BJ (cell line): ENCODE measurements at regions of chr9 and their contacts with region 1.

Region 1: GRCh38 chr9:136122425-136123383 is 4.0 kb upstream of the TMEM250 start:
- DNase-seq: no peak
- H3K4me3 ChIP-seq: no peak overlapping the region; the same call in 1 of the 2 replicates
- H3K27me3 ChIP-seq: peaks cover 6% of the 10 kb centered on the region
- CTCF ChIP-seq: peak; percentile 96

Region 2: GRCh38 chr9:135864447-135865049 is 258.2 kb before region 1 on chr9:
- CTCF ChIA-PET with region 1: interaction called, 14 read pairs
- POLR2A ChIA-PET with region 1: no interaction called
- DNase-seq: no peak
- H3K4me3 ChIP-seq: no peak overlapping the region
- H3K27me3 ChIP-seq: no peaks in the 10 kb centered on the region
- CTCF ChIP-seq: peak; percentile 96

Region 3: DNA sequence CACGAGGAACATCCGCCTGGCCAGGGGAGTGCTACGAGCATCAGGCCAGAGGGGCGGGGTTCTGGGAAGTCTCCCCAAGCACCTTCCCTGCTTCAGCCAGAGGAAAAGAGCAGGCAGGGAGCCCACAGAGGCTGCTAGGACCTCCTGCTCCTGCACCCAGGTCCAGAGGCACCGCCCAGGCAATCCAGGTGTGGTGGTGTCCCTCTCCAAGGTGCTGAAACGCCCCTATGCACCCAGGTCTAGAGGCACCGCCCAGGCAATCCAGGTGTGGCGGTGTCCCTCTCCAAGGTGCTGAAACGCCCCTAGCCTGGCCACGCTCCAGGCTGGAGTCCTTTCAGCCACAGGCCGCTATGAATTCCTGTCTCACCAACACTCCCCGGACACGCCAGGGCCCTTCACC is 150.8 kb before region 1 on chr9:
- CTCF ChIA-PET with region 1: interaction called, 128 read pairs
- POLR2A ChIA-PET with region 1: no interaction called
- DNase-seq: no peak
- H3K4me3 ChIP-seq: no peak overlapping the region
- H3K27me3 ChIP-seq: peaks cover 3% of the 10 kb centered on the region; the same call in 1 of the 2 replicates
- CTCF ChIP-seq: no peak

Region 4: GRCh38 chr9:136093995-136094881 is 28.5 kb before region 1 on chr9:
- CTCF ChIA-PET with region 1: interaction called, 20 read pairs
- POLR2A ChIA-PET with region 1: interaction called, 4 read pairs
- DNase-seq: no peak
- H3K4me3 ChIP-seq: peak overlapping the region; percentile 68
- H3K27me3 ChIP-seq: no peaks in the 10 kb centered on the region
- CTCF ChIP-seq: no peak